Activated CD4-positive, alpha-beta T cell treated with anti-CD3 and anti-CD28 coated beads, Interleukin-2, amount 10 ng/mL, durations not matched to agents 24 days and 14 days (primary cell): ENCODE measurements at regions of chr12 and their contacts with region 1.

Region 1: GRCh38 chr12:110776410-110776809 is 33.7 kb upstream of the PPP1CC start:
- DNase-seq: peak; percentile 85
- H3K4me3 Mint-ChIP-seq: peak overlapping the region; percentile 72
- H3K27ac Mint-ChIP-seq: peak overlapping the region; percentile 97
- H3K4me1 Mint-ChIP-seq: peaks cover 60% of the 10 kb centered on the region
- H3K27me3 Mint-ChIP-seq: no peaks in the 10 kb centered on the region

Region 2: GRCh38 chr12:110501752-110502738 is 274.4 kb before region 1 on chr12 and contains the starts of genes RAD9B and VPS29:
- intact Hi-C with region 1: loop called (anchors 2 kb)
- DNase-seq: peak; percentile 100
- H3K4me3 Mint-ChIP-seq: peak within 1 kb of the TSS; percentile 99
- H3K27ac Mint-ChIP-seq: peak within 1 kb of the TSS; percentile 99
- H3K4me1 Mint-ChIP-seq: peaks cover 27% of the 10 kb centered on the region
- H3K27me3 Mint-ChIP-seq: peaks cover 2% of the 10 kb centered on the region
- total RNA-seq, gene RAD9B: 0.37 and 0.95 TPM in 2 replicates
- total RNA-seq, gene VPS29: 101 and 106 TPM in 2 replicates

Region 3: GRCh38 chr12:110577717-110578521 is 198.5 kb before region 1 on chr12:
- intact Hi-C with region 1: loop called (anchors 1 kb)
- DNase-seq: peak; percentile 87
- H3K4me3 Mint-ChIP-seq: peak overlapping the region; percentile 98
- H3K27ac Mint-ChIP-seq: peak overlapping the region; percentile 97
- H3K4me1 Mint-ChIP-seq: peaks cover 59% of the 10 kb centered on the region
- H3K27me3 Mint-ChIP-seq: no peaks in the 10 kb centered on the region

Region 4: DNA sequence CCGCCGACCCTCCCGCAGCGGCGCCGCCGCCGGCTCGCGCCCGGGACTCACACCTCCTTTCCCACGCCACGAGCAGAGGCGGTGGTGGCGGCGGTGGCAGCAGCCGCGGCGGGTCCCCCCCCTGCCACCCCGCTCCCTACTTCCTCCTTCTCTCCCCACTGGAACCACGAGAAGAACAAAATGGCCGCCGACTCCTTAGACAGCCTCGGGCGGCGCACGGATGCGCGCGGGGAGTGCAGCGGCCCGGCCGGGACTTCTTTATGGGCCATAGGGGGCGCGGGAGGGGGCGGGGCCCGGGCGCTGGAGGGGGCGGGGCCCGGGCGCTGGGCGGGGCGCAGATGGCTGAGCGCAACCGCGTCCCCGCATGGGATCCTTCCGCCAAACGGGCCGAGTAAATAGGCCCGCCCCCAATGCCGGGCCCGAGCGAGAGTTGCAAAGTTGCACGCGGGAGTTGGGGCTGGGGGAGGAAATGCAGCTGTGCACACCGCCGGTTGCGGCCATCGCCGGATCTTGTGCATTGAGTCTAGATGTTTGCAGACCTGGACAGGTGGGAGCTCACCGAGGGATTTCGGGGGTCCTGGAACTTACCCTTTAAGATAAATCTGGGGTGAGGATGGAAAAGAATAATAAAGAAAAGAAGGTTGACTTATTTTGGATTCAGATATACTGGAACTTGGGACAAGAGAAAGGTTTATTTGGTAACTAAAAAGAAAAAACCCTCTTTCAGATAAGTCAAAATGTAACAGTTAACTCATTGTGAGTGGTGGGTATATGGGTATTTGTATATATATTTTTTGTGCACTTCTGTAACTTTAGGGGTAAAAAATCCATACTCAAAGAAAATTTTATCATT is 33.5 kb before region 1 on chr12 and contains the start of gene PPP1CC:
- intact Hi-C with region 1: loop called (anchors 1 kb)
- DNase-seq: peak; percentile 97
- H3K4me3 Mint-ChIP-seq: peak within 1 kb of the TSS; percentile 99
- H3K27ac Mint-ChIP-seq: peak within 1 kb of the TSS; percentile 99
- H3K4me1 Mint-ChIP-seq: peaks cover 35% of the 10 kb centered on the region
- H3K27me3 Mint-ChIP-seq: no peaks in the 10 kb centered on the region
- total RNA-seq, gene PPP1CC: 459 and 489 TPM in 2 replicates

Region 5: GRCh38 chr12:110762891-110763290 is 13.5 kb before region 1 on chr12:
- intact Hi-C with region 1: loop called (anchors 2 kb)
- DNase-seq: no peak
- H3K4me3 Mint-ChIP-seq: peak overlapping the region; percentile 68
- H3K27ac Mint-ChIP-seq: peak overlapping the region; percentile 90
- H3K4me1 Mint-ChIP-seq: peaks cover 15% of the 10 kb centered on the region
- H3K27me3 Mint-ChIP-seq: no peaks in the 10 kb centered on the region

Region 6: DNA sequence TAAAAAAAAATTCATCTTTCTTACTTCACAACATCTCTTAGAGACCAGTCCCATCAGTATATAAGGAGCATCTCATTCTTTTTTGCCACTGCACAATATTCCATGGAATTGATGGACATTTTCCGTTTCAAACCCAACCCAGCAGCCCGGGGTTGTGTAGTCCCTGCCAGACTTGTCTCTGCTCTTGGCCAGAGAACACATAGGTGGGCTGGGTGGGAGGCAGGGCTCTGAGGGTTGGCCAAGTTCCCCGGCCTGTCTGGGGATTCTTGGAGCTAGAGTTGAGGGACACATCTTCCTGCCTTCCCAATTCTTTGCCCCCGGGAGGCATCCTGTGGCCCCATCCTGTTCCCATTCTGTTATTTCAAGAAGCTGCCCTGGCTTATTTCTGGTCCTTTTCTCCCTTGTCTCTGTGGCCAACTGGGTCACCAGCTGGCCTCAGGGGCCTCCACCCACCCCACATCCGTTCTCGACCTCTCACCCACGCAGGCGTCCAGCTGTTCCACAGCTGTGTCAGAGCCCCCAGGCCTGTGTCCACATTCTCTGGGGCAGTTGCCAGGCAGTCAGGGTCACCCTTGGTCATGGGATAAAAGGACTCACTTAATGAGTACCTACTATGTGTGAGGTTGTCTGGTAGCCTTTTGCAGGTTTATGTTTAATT is 18.3 kb after region 1 on chr12:
- intact Hi-C with region 1: loop called (anchors 1 kb)
- DNase-seq: no peak
- H3K4me3 Mint-ChIP-seq: no peak overlapping the region
- H3K27ac Mint-ChIP-seq: no peak overlapping the region
- H3K4me1 Mint-ChIP-seq: peaks cover 21% of the 10 kb centered on the region
- H3K27me3 Mint-ChIP-seq: no peaks in the 10 kb centered on the region

Region 7: DNA sequence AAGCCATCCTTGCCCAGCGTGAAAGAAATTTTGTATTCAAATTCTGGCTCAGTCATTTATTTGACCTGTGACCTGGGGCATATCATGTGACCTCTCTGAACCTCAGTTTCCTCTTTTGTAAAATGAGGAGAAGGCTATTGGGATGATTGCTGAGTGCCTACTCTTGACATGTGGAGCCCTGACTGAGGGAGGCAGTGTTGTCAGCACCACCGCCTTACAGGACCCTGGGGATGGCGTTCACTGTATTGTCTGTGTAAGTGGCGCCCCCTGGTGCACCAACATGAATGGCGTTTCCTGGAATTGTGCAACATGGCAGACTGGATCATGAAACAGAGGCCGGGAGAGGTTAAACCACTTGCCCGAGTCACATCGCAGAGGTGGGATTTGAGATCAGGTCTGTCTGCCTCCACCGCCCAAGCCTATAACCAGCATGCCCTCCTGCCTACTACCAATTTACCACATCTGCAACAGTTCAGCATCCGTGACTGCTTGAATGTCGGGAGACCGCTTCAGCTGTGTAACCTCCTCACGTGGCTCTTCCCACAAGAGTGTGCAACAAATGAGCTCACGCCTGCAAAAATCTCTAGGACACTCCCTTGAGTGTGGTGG is 50.3 kb after region 1 on chr12:
- intact Hi-C with region 1: loop called (anchors 1 kb)
- DNase-seq: peak; percentile 96
- H3K4me3 Mint-ChIP-seq: peak overlapping the region; percentile 43
- H3K27ac Mint-ChIP-seq: peak overlapping the region; percentile 46
- H3K4me1 Mint-ChIP-seq: peaks cover 16% of the 10 kb centered on the region
- H3K27me3 Mint-ChIP-seq: peaks cover 10% of the 10 kb centered on the region